Heart right ventricle (tissue), 16 donors: ENCODE measurements at regions of chr6 and their contacts with region 1.

Region 1: DNA sequence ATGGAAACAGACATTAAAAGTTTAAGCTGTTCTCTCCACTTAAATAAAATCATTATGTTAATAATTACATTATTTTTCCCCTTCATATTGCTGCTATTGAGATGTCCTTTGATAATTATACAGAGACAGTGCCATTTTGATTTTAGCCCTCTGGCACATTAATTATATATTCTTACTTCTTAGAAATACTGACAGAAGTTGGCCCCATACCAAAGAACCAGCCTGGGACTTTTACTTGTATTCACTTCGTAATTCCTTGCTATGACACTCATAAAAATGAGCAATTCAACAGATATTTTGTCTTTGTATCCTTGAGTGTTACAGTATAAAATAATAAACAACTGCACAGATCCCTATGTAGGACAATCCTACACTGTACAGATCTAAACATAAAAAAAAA is 743.7 kb downstream of the TBC1D32 start:
- DNase-seq: no peak
- ATAC-seq: no peak
- H3K4me3 ChIP-seq: no peak overlapping the region
- H3K27ac ChIP-seq: no peak overlapping the region
- H3K4me1 ChIP-seq: no peaks in the 10 kb centered on the region
- H3K27me3 ChIP-seq: no peaks in the 10 kb centered on the region
- CTCF ChIP-seq: no peak

Region 2: DNA sequence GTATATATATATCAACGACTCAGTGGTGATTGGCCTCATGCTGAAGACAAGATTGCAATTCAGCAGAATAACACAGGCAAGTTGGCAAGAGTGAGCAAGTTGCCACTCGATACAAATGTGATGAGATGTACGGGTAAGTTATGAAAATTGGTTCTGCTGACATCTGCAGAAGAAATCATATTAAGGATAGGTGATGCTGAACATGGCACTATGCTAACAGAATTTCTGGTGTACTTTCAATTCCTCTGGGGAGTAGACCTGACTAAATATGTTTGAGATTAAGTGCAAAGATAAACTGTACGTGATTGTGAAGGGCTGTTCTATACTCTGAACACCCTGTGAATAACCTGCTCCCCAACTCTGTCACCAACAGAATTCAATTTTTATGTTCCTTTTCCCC is 14.6 kb before region 1 on chr6:
- intact Hi-C with region 1: loop called in 1 of 10 experiments (anchors 1 kb)
- DNase-seq: no peak
- ATAC-seq: no peak
- H3K4me3 ChIP-seq: no peak overlapping the region
- H3K27ac ChIP-seq: no peak overlapping the region
- H3K4me1 ChIP-seq: no peaks in the 10 kb centered on the region
- H3K27me3 ChIP-seq: no peaks in the 10 kb centered on the region
- CTCF ChIP-seq: no peak

Region 3: GRCh38 chr6:120908767-120909166 is 318.2 kb after region 1 on chr6:
- intact Hi-C with region 1: no loop called
- DNase-seq: no peak
- ATAC-seq: no peak
- H3K4me3 ChIP-seq: no peak overlapping the region
- H3K27ac ChIP-seq: no peak overlapping the region
- H3K4me1 ChIP-seq: no peaks in the 10 kb centered on the region
- H3K27me3 ChIP-seq: no peaks in the 10 kb centered on the region
- CTCF ChIP-seq: no peak